Vagina (tissue), 2 donors: ENCODE measurements at regions of chr4 and their contacts with region 1.

Region 1: GRCh38 chr4:56953680-56954520 is 23.5 kb downstream of the NOA1 start:
- DNase-seq: peak in 1 of 2 donors; percentile 56
- H3K4me3 ChIP-seq: no peak overlapping the region
- H3K27ac ChIP-seq: no peak overlapping the region
- H3K4me1 ChIP-seq: no peaks in the 10 kb centered on the region
- H3K27me3 ChIP-seq: no peaks in the 10 kb centered on the region
- CTCF ChIP-seq: no peak
- POLR2A ChIP-seq: no peak

Region 2: DNA sequence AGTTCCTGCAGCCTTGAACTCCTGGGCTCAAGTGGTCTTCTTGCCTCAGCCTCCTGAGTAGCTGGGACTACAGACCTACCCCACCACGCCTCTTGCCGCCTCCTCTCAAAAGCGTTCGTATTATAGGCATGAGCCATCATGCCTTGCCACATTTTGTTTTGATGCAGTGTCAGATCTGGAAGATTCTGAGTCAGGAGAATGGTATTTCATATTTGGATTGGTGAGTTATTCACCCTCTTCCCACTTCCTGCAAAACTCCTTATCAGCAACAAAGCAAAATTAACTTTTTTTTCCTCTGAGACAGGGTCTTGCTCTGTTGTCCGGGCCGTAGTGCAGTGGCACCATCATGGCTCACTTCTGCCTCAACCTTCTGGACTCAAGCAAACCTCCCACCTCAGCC is 16.6 kb before region 1 on chr4:
- intact Hi-C with region 1: loop called (anchors 2 kb)
- DNase-seq: no peak
- H3K4me3 ChIP-seq: no peak overlapping the region
- H3K27ac ChIP-seq: no peak overlapping the region
- H3K4me1 ChIP-seq: peaks cover 21% of the 10 kb centered on the region
- H3K27me3 ChIP-seq: no peaks in the 10 kb centered on the region
- CTCF ChIP-seq: no peak
- POLR2A ChIP-seq: no peak

Region 3: GRCh38 chr4:58144721-58145120 is 1190.8 kb after region 1 on chr4:
- intact Hi-C with region 1: no loop called
- DNase-seq: no peak
- H3K4me3 ChIP-seq: no peak overlapping the region
- H3K27ac ChIP-seq: no peak overlapping the region
- H3K4me1 ChIP-seq: no peaks in the 10 kb centered on the region
- H3K27me3 ChIP-seq: no peaks in the 10 kb centered on the region
- CTCF ChIP-seq: no peak
- POLR2A ChIP-seq: no peak